Panc1 (cell line): ENCODE measurements at regions of chr10 and their contacts with region 1.

Region 1: GRCh38 chr10:114943000-114943399 is 5.0 kb downstream of the TRUB1 start:
- DNase-seq: no peak
- ATAC-seq: no peak
- H3K4me3 ChIP-seq: no peak overlapping the region
- H3K27ac ChIP-seq: no peak overlapping the region
- H3K4me1 ChIP-seq: peaks cover 13% of the 10 kb centered on the region
- H3K27me3 ChIP-seq: no peaks in the 10 kb centered on the region
- CTCF ChIP-seq: no peak

Region 2: DNA sequence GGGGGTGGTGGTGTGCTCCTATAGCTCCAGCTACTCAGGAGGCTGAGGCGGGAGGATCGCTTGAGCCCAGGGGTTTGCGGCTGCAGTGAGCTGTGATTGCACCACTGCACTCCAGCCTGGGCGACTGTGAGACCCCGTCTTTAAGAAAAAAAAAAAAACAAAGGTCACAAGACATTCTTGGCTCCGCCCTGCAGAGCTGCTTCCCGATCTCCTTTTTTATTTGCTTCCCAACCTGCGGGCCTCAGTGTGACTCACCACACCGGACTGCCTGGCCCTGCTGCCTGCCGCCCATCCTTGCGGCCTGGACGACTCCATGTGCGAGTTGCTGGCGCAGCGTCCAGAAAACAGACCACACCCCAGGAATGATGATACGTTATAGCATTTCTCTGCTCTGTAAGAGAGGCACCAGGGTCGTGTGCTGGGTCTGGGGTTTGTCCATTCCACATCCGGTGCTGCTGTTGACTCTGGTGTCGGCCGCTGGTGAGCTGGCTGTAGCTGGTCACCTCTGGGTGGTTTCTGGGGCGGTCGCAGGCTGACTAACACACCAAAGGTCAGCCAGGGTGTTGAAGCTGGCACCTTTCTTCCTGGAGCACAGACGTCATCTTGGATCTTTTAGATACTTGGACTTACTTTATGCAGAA is 1869.3 kb before region 1 on chr10:
- CTCF ChIA-PET with region 1: no interaction called
- POLR2A ChIA-PET with region 1: interaction called, 12 read pairs
- in situ Hi-C with region 1: no loop called
- intact Hi-C with region 1: no loop called
- DNase-seq: peak; percentile 98
- ATAC-seq: peak; percentile 96
- H3K4me3 ChIP-seq: peak overlapping the region; percentile 18 to 21
- H3K27ac ChIP-seq: peak overlapping the region; percentile 99
- H3K4me1 ChIP-seq: peaks cover 70% of the 10 kb centered on the region
- H3K27me3 ChIP-seq: no peaks in the 10 kb centered on the region
- CTCF ChIP-seq: no peak

Region 3: GRCh38 chr10:114131094-114131493 is 811.9 kb before region 1 on chr10:
- CTCF ChIA-PET with region 1: no interaction called
- POLR2A ChIA-PET with region 1: no interaction called
- in situ Hi-C with region 1: no loop called
- intact Hi-C with region 1: no loop called
- DNase-seq: no peak
- ATAC-seq: no peak
- H3K4me3 ChIP-seq: no peak overlapping the region
- H3K27ac ChIP-seq: no peak overlapping the region
- H3K4me1 ChIP-seq: no peaks in the 10 kb centered on the region
- H3K27me3 ChIP-seq: no peaks in the 10 kb centered on the region
- CTCF ChIP-seq: no peak